ENCODE measurements at regions of chr17 and their contacts with region 1.

Region 1: GRCh38 chr17:77404812-77405581 is 264.2 kb downstream of the SEC14L1 start:
- DNase-seq: peak; percentile 83 to 87 (median 87)
- H3K4me3 ChIP-seq: peak overlapping the region; percentile 13 to 79 (median 42)
- H3K4me3 Mint-ChIP-seq: peak overlapping the region; percentile 82 to 97
- H3K27ac ChIP-seq: peak overlapping the region; percentile 69 to 96
- H3K27ac Mint-ChIP-seq: peak overlapping the region; percentile 95 to 98 (median 97)
- H3K4me1 ChIP-seq: peaks cover 75 to 91% of the 10 kb centered on the region in 2 donors
- H3K4me1 Mint-ChIP-seq: peaks cover 86% of the 10 kb centered on the region
- H3K27me3 ChIP-seq: no peaks in the 10 kb centered on the region
- H3K27me3 Mint-ChIP-seq: peaks cover 3 to 8% (median 4%) of the 10 kb centered on the region in 3 donors
- CTCF ChIP-seq: no peak

Region 2: GRCh38 chr17:77088455-77089123 is 316.4 kb before region 1 on chr17:
- intact Hi-C with region 1: no loop called
- DNase-seq: peak; percentile 96 to 98 (median 98)
- H3K4me3 ChIP-seq: peak overlapping the region; percentile 85 to 96 (median 93)
- H3K4me3 Mint-ChIP-seq: peak overlapping the region; percentile 91 to 97
- H3K27ac ChIP-seq: peak overlapping the region; percentile 94 to 96
- H3K27ac Mint-ChIP-seq: peak overlapping the region; percentile 93 to 99 (median 97)
- H3K4me1 ChIP-seq: peaks cover 25 to 29% of the 10 kb centered on the region in 2 donors
- H3K4me1 Mint-ChIP-seq: peaks cover 33% of the 10 kb centered on the region
- H3K27me3 ChIP-seq: peaks cover 0 to 10% of the 10 kb centered on the region in 2 donors
- H3K27me3 Mint-ChIP-seq: peaks cover 11 to 23% (median 23%) of the 10 kb centered on the region in 3 donors
- CTCF ChIP-seq: peak; percentile 75

Region 3: DNA sequence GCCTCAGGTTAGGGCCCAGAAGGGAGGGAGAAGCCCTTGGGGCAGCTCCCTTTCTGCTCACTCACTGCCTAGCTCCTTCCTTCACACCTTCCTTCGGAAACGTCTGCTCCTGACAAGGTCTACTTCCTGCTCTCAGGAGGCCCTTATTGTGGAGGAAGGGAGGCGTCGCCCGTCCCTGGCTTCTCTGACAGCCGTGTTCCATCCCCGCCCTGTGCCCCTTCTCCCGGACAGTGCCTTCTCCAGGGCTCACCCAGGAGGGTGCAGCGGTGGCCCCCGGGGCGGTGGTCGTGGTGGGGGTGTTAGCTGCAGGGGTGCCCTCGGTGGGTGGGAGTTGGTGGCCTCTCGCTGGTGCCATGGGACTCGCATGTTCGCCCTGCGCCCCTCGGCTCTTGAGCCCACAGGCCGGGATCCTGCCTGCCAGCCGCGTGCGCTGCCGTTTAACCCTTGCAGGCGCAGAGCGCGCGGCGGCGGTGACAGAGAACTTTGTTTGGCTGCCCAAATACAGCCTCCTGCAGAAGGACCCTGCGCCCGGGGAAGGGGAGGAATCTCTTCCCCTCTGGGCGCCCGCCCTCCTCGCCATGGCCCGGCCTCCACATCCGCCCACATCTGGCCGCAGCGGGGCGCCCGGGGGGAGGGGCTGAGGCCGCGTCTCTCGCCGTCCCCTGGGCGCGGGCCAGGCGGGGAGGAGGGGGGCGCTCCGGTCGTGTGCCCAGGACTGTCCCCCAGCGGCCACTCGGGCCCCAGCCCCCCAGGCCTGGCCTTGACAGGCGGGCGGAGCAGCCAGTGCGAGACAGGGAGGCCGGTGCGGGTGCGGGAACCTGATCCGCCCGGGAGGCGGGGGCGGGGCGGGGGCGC is 32.3 kb before region 1 on chr17:
- intact Hi-C with region 1: no loop called
- DNase-seq: peak; percentile 48 to 56 (median 52)
- H3K4me3 ChIP-seq: peak overlapping the region; percentile 73 to 100 (median 74)
- H3K4me3 Mint-ChIP-seq: peak overlapping the region; percentile 71 to 84
- H3K27ac ChIP-seq: peak overlapping the region in 1 of 2 donors; percentile 89
- H3K27ac Mint-ChIP-seq: peak overlapping the region in 2 of 7 donors; percentile 43 to 68
- H3K4me1 ChIP-seq: peaks cover 41 to 58% of the 10 kb centered on the region in 2 donors
- H3K4me1 Mint-ChIP-seq: peaks cover 50% of the 10 kb centered on the region
- H3K27me3 ChIP-seq: no peaks in the 10 kb centered on the region
- H3K27me3 Mint-ChIP-seq: peaks cover 4 to 9% (median 8%) of the 10 kb centered on the region in 3 donors
- CTCF ChIP-seq: no peak

Region 4: DNA sequence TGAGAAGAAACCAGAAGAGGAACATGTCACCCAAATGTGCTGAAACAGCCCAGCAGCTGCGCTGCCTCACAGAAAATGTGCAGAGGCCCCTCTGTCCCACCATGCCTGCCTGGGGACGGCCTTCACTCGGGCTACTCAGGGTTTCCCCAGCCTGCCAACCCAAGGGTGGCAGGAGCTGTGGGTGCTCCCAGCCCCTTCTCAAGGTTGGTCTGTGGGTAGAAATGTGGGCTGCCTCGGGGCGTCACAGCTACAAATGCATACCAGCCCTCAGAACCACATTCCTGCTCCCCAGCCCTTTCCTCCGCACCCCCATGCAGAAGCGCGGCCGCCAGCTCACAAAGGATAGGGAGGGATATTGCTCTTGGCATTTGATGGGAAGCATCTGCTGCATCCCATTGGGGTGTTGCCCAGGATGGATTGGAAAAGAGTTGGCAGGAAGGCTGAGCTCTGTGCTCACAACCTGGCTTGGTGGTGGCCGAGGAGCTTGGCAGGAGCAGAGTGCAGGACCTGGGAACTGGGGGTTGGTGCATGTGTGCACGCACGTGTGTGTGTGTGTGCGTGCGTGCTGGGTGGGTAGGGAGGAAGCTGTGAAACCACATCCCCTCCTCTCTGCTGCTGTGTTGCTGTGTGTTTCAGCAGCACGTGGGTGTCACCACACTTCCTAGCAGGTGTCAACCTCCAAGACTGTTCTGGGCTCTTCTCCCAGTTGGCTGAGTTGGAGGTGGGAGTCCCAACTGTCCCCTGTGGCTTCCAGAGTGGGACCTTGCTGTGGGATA is 40.2 kb after region 1 on chr17:
- intact Hi-C with region 1: loop called in 1 of 2 experiments (anchors 5 kb)
- DNase-seq: peak; percentile 79 to 91 (median 86)
- H3K4me3 ChIP-seq: peak overlapping the region in 1 of 3 experiments; percentile 66
- H3K4me3 Mint-ChIP-seq: peak overlapping the region; percentile 65 to 90
- H3K27ac ChIP-seq: peak overlapping the region; percentile 81 to 96
- H3K27ac Mint-ChIP-seq: peak overlapping the region; percentile 85 to 96 (median 93)
- H3K4me1 ChIP-seq: peaks cover 86 to 90% of the 10 kb centered on the region in 2 donors
- H3K4me1 Mint-ChIP-seq: peaks cover 93% of the 10 kb centered on the region
- H3K27me3 ChIP-seq: no peaks in the 10 kb centered on the region
- H3K27me3 Mint-ChIP-seq: peaks cover 0 to 2% (median 2%) of the 10 kb centered on the region in 3 donors
- CTCF ChIP-seq: no peak

Region 5: GRCh38 chr17:77455111-77455890 is 50.3 kb after region 1 on chr17:
- intact Hi-C with region 1: no loop called
- DNase-seq: no peak
- H3K4me3 ChIP-seq: peak overlapping the region; percentile 26 to 89 (median 55)
- H3K4me3 Mint-ChIP-seq: peak overlapping the region; percentile 97 to 98
- H3K27ac ChIP-seq: peak overlapping the region; percentile 57 to 85
- H3K27ac Mint-ChIP-seq: peak overlapping the region in 6 of 7 donors; percentile 53 to 85 (median 70)
- H3K4me1 ChIP-seq: peaks cover 85 to 91% of the 10 kb centered on the region in 2 donors
- H3K4me1 Mint-ChIP-seq: peaks cover 89% of the 10 kb centered on the region
- H3K27me3 ChIP-seq: no peaks in the 10 kb centered on the region
- H3K27me3 Mint-ChIP-seq: peaks cover 0 to 3% (median 2%) of the 10 kb centered on the region in 3 donors
- CTCF ChIP-seq: no peak

Region 6: DNA sequence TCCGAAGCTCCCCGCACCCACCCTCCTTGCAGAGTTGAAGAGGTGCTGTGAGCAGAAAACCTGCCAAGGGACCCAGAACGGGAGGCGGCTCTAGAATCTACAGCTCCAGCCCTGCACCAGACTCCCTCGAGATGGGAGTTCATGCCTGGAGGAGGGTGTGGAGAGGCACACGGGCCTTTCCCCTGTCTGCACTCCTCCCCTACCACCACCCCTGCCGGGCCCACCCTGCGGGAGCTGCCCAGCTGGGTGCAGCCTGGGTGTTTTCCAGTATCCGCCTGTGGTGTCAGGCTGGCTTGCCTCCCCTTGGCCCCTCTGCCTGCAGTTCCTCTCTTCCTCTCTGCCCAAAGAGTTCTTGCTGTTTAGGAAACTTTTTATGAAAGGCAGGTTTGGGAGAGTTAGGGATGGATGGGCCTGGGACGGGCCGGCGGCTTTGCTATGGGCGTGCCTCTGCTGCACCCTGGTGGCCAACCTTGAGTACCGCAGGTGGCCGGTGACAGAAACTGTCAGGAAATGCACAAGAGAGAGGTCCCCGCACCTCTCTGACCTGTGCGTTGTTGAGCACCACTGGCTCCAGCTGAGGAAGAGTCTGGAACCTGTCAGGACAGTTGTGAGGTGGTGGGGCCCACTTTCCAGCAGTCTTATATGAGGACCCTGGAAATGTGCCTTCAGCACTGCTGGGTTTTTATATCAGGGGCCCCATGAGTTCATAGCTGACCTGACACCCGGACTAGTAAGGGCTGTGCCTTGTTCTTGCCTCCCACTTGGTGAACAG is 89.9 kb after region 1 on chr17:
- intact Hi-C with region 1: loop called (anchors 2 to 5 kb)
- DNase-seq: peak; percentile 62 to 75 (median 69)
- H3K4me3 ChIP-seq: no peak overlapping the region
- H3K4me3 Mint-ChIP-seq: no peak overlapping the region
- H3K27ac ChIP-seq: peak overlapping the region in 1 of 2 donors; percentile 70
- H3K27ac Mint-ChIP-seq: peak overlapping the region in 4 of 7 donors; percentile 46 to 80 (median 63)
- H3K4me1 ChIP-seq: peaks cover 29 to 35% of the 10 kb centered on the region in 2 donors
- H3K4me1 Mint-ChIP-seq: peaks cover 33% of the 10 kb centered on the region
- H3K27me3 ChIP-seq: no peaks in the 10 kb centered on the region
- H3K27me3 Mint-ChIP-seq: no peaks in the 10 kb centered on the region
- CTCF ChIP-seq: peak; percentile 96